ENCODE measurements at regions of chr17 and their contacts with region 1.

Region 1: GRCh38 chr17:53499277-53499676 is 323.4 kb upstream of the KIF2B start:
- DNase-seq: no peak
- H3K4me3 ChIP-seq: no peak overlapping the region
- H3K27ac ChIP-seq: no peak overlapping the region
- H3K4me1 ChIP-seq: no peaks in the 10 kb centered on the region
- H3K27me3 ChIP-seq: no peaks in the 10 kb centered on the region
- CTCF ChIP-seq: no peak

Region 2: DNA sequence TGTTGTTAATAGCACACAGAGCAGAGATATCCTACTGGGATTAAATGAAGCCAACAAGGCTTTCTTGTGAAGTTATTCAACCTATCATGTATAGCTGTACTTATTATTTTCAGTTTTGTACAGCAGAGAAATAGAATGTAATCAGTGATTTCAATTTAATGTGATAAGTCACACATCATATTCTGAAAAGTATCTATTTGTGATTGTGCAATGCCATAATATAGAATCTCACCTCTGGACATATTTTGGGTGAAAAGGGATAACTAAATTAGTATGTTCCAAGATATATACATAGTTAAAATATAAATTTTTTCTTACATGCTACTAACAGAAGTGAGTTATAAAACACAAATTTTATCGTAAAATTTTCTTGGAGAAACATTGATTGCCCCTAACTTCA is 220.8 kb before region 1 on chr17:
- CTCF ChIA-PET with region 1: no interaction called
- POLR2A ChIA-PET with region 1: no interaction called
- intact Hi-C with region 1: no loop called
- DNase-seq: no peak
- H3K4me3 ChIP-seq: no peak overlapping the region
- H3K27ac ChIP-seq: no peak overlapping the region
- H3K4me1 ChIP-seq: no peaks in the 10 kb centered on the region
- H3K27me3 ChIP-seq: no peaks in the 10 kb centered on the region
- CTCF ChIP-seq: no peak

Region 3: GRCh38 chr17:53560953-53561352 is 61.7 kb after region 1 on chr17:
- CTCF ChIA-PET with region 1: no interaction called
- POLR2A ChIA-PET with region 1: no interaction called
- intact Hi-C with region 1: loop called (anchors 10 kb)
- DNase-seq: no peak
- H3K4me3 ChIP-seq: no peak overlapping the region
- H3K27ac ChIP-seq: no peak overlapping the region
- H3K4me1 ChIP-seq: no peaks in the 10 kb centered on the region
- H3K27me3 ChIP-seq: no peaks in the 10 kb centered on the region
- CTCF ChIP-seq: no peak

Measured in A673 (cell line).